HepG2 (cell line): ENCODE measurements at regions of chr4 and their contacts with region 1.

Region 1: GRCh38 chr4:48079972-48080391 is 54.1 kb downstream of the TXK start:
- DNase-seq: no peak
- ATAC-seq: no peak
- H3K4me3 ChIP-seq: no peak overlapping the region
- H3K27ac ChIP-seq: no peak overlapping the region
- H3K4me1 ChIP-seq: no peaks in the 10 kb centered on the region
- H3K27me3 ChIP-seq: no peaks in the 10 kb centered on the region; a peak in 1 of 5 replicates
- CTCF ChIP-seq: no peak
- EP300 ChIP-seq: no peak
- POLR2A ChIP-seq: no peak
- RAD21 ChIP-seq: no peak

Region 2: GRCh38 chr4:47359891-47360290 is 720.1 kb before region 1 on chr4:
- CTCF ChIA-PET with region 1: no interaction called
- POLR2A ChIA-PET with region 1: no interaction called
- in situ Hi-C with region 1: no loop called
- intact Hi-C with region 1: no loop called
- DNase-seq: no peak
- ATAC-seq: no peak
- H3K4me3 ChIP-seq: no peak overlapping the region
- H3K27ac ChIP-seq: no peak overlapping the region
- H3K4me1 ChIP-seq: no peaks in the 10 kb centered on the region
- H3K27me3 ChIP-seq: no peaks in the 10 kb centered on the region
- CTCF ChIP-seq: no peak
- EP300 ChIP-seq: no peak
- POLR2A ChIP-seq: no peak
- RAD21 ChIP-seq: no peak

Region 3: GRCh38 chr4:48002267-48002666 is 77.7 kb before region 1 on chr4:
- CTCF ChIA-PET with region 1: interaction called, 3 read pairs
- POLR2A ChIA-PET with region 1: no interaction called
- in situ Hi-C with region 1: loop called (anchors 5 kb)
- intact Hi-C with region 1: no loop called
- DNase-seq: no peak
- ATAC-seq: no peak
- H3K4me3 ChIP-seq: no peak overlapping the region
- H3K27ac ChIP-seq: no peak overlapping the region
- H3K4me1 ChIP-seq: no peaks in the 10 kb centered on the region
- H3K27me3 ChIP-seq: no peaks in the 10 kb centered on the region
- CTCF ChIP-seq: no peak
- EP300 ChIP-seq: no peak
- POLR2A ChIP-seq: no peak
- RAD21 ChIP-seq: no peak

Region 4: GRCh38 chr4:48127682-48128394 is 47.9 kb after region 1 on chr4:
- CTCF ChIA-PET with region 1: no interaction called
- POLR2A ChIA-PET with region 1: no interaction called
- in situ Hi-C with region 1: no loop called
- intact Hi-C with region 1: no loop called
- DNase-seq: peak; percentile 44
- ATAC-seq: peak; percentile 97
- H3K4me3 ChIP-seq: no peak overlapping the region
- H3K27ac ChIP-seq: no peak overlapping the region
- H3K4me1 ChIP-seq: no peaks in the 10 kb centered on the region
- H3K27me3 ChIP-seq: no peaks in the 10 kb centered on the region
- CTCF ChIP-seq: peak; percentile 70
- EP300 ChIP-seq: no peak
- POLR2A ChIP-seq: no peak
- RAD21 ChIP-seq: peak; percentile 58

Region 5: DNA sequence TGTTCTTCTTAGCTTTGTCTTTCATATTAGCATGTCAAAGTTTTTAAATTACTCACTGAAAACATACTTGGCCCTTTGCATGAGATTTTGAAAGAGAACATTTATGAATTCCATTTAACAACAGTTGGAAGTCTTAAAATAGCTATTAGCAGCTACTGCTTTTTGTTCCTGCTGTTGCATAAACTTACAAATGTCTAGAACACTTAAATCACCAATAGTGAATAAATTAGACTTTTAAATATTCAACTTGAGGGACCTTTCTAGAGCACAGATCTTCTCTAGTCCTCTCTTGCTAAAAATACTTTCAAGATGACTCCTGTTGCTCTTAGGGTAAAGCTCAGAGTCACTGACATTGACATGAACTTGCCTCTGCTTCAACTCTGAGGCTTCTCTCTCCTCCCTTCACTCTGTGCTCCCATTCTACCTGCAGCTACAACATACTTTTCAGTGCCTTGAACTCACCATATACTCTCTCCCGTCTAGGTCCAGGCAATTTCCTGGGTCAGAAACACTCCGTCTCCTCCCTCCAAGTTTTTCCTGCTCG is 69.9 kb after region 1 on chr4:
- CTCF ChIA-PET with region 1: no interaction called
- POLR2A ChIA-PET with region 1: no interaction called
- in situ Hi-C with region 1: no loop called
- intact Hi-C with region 1: no loop called
- DNase-seq: no peak
- ATAC-seq: no peak
- H3K4me3 ChIP-seq: no peak overlapping the region
- H3K27ac ChIP-seq: no peak overlapping the region
- H3K4me1 ChIP-seq: no peaks in the 10 kb centered on the region
- H3K27me3 ChIP-seq: no peaks in the 10 kb centered on the region
- CTCF ChIP-seq: no peak
- EP300 ChIP-seq: no peak
- POLR2A ChIP-seq: no peak
- RAD21 ChIP-seq: no peak